Breast epithelium (tissue), 4 donors: ENCODE measurements at regions of chr6 and their contacts with region 1.

Region 1: DNA sequence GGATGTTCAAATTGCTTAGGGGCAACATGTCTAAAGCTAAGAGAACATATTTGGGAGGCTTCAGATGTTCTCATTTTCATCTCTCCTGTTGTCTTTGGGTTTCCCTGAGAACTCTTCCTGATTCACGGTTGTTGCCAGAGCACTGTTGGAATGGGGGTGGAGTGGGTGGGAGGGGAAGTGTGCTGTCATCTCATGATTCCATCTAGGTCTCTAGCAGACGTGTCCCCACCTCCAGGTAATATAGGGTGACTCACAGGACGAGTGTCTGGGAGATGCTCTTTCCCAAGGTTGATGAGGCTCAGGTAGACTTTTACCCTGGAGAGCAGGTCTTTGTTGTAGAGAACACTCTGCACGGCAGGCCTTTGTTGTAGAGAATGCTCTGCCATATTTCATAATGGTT is 636.9 kb downstream of the QKI start:
- DNase-seq: no peak
- H3K4me3 ChIP-seq: no peak overlapping the region
- H3K27ac ChIP-seq: no peak overlapping the region
- H3K4me1 ChIP-seq: no peaks in the 10 kb centered on the region
- H3K27me3 ChIP-seq: no peaks in the 10 kb centered on the region
- CTCF ChIP-seq: no peak
- POLR2A ChIP-seq: no peak

Region 2: GRCh38 chr6:162200945-162201690 is 1850.3 kb before region 1 on chr6:
- intact Hi-C with region 1: loop called (anchors 5 kb)
- DNase-seq: no peak
- H3K4me3 ChIP-seq: no peak overlapping the region
- H3K27ac ChIP-seq: no peak overlapping the region
- H3K4me1 ChIP-seq: no peaks in the 10 kb centered on the region
- H3K27me3 ChIP-seq: no peaks in the 10 kb centered on the region
- CTCF ChIP-seq: no peak
- POLR2A ChIP-seq: no peak

Region 3: GRCh38 chr6:163554663-163555062 is 496.8 kb before region 1 on chr6:
- intact Hi-C with region 1: loop called (anchors 10 kb)
- DNase-seq: no peak
- H3K4me3 ChIP-seq: no peak overlapping the region
- H3K27ac ChIP-seq: no peak overlapping the region
- H3K4me1 ChIP-seq: no peaks in the 10 kb centered on the region
- H3K27me3 ChIP-seq: no peaks in the 10 kb centered on the region
- CTCF ChIP-seq: peak in 1 of 3 donors; percentile 18
- POLR2A ChIP-seq: no peak